PC-3 (cell line): ENCODE measurements at regions of chr6 and their contacts with region 1.

Region 1: DNA sequence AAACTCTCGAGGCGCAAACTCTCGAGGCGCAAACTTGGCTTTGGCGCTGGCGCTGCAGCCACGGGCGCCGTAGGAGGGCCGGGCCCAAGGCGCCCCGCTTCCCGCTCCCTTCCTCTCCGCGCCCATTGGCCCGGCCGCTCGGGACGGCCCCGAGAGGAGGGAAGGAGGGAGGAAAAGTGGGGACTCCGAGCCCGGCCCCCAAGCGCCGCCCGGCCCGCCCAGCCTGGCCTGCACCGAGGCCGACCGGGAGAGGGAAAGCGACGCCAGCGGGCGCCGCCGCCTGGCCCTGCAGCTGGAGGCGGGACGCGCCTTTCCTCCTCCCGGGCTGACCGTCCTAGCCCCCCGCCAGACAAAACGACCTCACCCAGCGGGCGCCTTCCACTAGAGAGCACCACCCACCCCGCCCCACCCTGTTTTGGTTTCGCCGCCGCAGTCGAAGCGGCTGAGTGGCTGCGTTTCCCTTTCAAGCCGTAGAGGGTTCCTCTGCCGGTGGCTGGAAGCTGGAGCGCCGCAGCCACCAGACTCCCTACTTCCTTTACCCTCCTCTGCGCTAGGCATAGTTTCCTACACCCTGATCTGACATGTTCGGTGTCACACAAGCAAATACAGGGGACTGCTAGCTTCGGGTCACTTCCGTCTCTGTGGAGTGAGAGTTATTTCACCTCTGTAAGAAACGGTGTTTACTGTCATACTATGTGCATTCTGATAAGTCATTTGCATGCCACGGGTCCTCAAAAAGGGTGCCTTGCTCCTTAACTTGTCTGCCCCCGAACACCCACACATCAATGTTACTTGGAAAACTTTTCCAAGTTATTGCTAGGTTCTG is at the start of gene MBOAT1:
- DNase-seq: peak; percentile 93
- ATAC-seq: peak; percentile 94
- H3K4me3 ChIP-seq: peak within 1 kb of the TSS; percentile 73
- H3K27ac ChIP-seq: peak within 1 kb of the TSS; percentile 74
- H3K4me1 ChIP-seq: peaks cover 20% of the 10 kb centered on the region
- H3K27me3 ChIP-seq: no peaks in the 10 kb centered on the region
- CTCF ChIP-seq: no peak
- total RNA-seq, gene MBOAT1: 8.4 and 10.3 TPM in 2 replicates

Region 2: GRCh38 chr6:19934996-19935591 is 277.5 kb before region 1 on chr6:
- CTCF ChIA-PET with region 1: no interaction called
- POLR2A ChIA-PET with region 1: no interaction called
- intact Hi-C with region 1: no loop called
- DNase-seq: no peak
- ATAC-seq: no peak
- H3K4me3 ChIP-seq: no peak overlapping the region
- H3K27ac ChIP-seq: no peak overlapping the region
- H3K4me1 ChIP-seq: no peaks in the 10 kb centered on the region
- H3K27me3 ChIP-seq: peaks cover 22% of the 10 kb centered on the region
- CTCF ChIP-seq: no peak

Region 3: GRCh38 chr6:20126789-20127653 is 85.6 kb before region 1 on chr6:
- CTCF ChIA-PET with region 1: interaction called, 5 read pairs
- POLR2A ChIA-PET with region 1: no interaction called
- intact Hi-C with region 1: loop called (anchors 2 kb)
- DNase-seq: peak; percentile 68
- ATAC-seq: peak; percentile 92
- H3K4me3 ChIP-seq: no peak overlapping the region
- H3K27ac ChIP-seq: no peak overlapping the region
- H3K4me1 ChIP-seq: peaks cover 8% of the 10 kb centered on the region
- H3K27me3 ChIP-seq: no peaks in the 10 kb centered on the region
- CTCF ChIP-seq: peak; percentile 91

Region 4: DNA sequence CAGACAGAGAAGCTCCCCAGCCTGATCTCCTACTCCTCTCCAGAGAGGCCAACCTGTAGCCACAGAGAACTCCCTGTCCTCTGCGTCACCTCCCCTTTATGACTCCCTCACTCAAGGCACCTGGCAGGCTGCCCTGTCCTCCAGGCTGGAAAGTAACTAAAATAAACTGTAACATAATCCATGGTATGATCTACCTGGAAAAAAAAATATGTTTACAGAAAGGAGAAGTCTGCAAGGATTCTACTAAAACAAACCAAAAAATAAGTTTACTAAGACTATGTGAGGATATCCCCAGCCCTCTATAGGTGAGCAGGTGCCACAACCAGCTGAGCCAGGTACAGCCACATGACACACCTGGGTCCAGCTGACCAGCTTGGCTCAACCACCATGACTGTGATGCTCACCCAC is 29.6 kb before region 1 on chr6:
- CTCF ChIA-PET with region 1: no interaction called
- POLR2A ChIA-PET with region 1: no interaction called
- intact Hi-C with region 1: loop called (anchors 1 kb)
- DNase-seq: peak; percentile 97
- ATAC-seq: peak; percentile 99
- H3K4me3 ChIP-seq: no peak overlapping the region
- H3K27ac ChIP-seq: peak overlapping the region; percentile 61
- H3K4me1 ChIP-seq: peaks cover 15% of the 10 kb centered on the region
- H3K27me3 ChIP-seq: no peaks in the 10 kb centered on the region
- CTCF ChIP-seq: peak; percentile 52

Region 5: DNA sequence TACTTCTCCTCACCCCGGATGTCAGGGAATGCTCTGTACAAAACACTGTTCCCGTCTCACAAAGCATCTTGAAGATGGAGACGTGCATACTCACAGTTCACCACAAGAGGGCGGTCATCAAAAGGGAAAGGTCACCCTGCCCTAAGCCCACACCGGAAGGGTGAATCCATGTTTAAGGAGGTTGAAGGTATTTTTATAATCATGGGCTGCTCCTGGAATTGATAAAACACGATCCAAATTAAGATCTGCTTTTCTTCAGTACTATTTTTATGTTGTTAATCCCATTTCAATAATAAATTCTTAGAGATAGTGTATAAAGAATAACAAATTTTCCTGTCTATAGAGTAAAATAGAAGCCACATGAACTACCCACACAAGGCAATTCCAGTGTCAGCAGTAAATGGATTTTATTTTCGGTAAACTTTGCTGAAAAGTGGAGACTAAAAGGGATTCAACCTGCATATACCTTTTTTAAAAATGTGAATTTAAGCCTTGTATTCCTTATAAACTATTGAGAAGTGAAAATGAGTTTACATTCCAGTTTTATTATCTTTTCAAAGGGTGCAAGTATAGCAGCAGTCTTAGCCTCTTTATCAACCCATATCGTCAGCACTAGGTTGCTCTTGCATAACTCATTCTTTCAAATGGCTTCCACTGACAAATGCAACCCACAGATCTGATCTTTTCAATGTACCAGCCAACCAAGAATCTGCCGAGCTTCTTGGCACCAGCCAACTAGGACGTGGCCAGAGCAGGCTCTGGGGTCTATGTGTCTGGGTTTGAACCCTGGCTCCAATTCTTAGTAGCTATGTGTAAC is 79.4 kb after region 1 on chr6:
- CTCF ChIA-PET with region 1: no interaction called
- POLR2A ChIA-PET with region 1: no interaction called
- intact Hi-C with region 1: loop called (anchors 5 kb)
- DNase-seq: peak; percentile 93
- ATAC-seq: peak; percentile 92
- H3K4me3 ChIP-seq: no peak overlapping the region
- H3K27ac ChIP-seq: no peak overlapping the region
- H3K4me1 ChIP-seq: peaks cover 5% of the 10 kb centered on the region
- H3K27me3 ChIP-seq: 0 out of 2 replicates have a peak, but pooled peaks cover 3% of the 10 kb centered on the region
- CTCF ChIP-seq: peak; percentile 94

Region 6: DNA sequence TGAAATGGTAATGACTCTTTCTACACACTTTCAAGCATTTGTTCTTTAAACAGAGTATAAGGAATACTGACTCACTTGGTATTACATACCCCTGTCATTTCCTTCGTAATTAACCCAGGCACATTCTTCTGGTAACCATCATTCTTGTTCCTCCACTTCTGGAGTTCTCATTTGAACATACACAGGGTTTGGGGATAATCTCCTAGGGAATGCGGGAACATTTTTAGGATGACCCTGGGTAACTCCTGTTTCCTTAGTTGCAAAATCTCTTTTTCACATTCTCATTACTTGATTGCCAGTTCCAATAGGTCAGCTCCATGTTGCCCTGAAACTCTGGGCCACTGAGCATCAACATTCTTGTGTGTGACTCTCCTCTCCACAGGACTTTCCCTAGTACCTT is 137.6 kb after region 1 on chr6:
- CTCF ChIA-PET with region 1: no interaction called
- POLR2A ChIA-PET with region 1: no interaction called
- intact Hi-C with region 1: no loop called
- DNase-seq: no peak
- ATAC-seq: no peak
- H3K4me3 ChIP-seq: no peak overlapping the region
- H3K27ac ChIP-seq: no peak overlapping the region
- H3K4me1 ChIP-seq: no peaks in the 10 kb centered on the region
- H3K27me3 ChIP-seq: peaks cover 6% of the 10 kb centered on the region; the same call in 1 of the 2 replicates
- CTCF ChIP-seq: no peak

Region 7: DNA sequence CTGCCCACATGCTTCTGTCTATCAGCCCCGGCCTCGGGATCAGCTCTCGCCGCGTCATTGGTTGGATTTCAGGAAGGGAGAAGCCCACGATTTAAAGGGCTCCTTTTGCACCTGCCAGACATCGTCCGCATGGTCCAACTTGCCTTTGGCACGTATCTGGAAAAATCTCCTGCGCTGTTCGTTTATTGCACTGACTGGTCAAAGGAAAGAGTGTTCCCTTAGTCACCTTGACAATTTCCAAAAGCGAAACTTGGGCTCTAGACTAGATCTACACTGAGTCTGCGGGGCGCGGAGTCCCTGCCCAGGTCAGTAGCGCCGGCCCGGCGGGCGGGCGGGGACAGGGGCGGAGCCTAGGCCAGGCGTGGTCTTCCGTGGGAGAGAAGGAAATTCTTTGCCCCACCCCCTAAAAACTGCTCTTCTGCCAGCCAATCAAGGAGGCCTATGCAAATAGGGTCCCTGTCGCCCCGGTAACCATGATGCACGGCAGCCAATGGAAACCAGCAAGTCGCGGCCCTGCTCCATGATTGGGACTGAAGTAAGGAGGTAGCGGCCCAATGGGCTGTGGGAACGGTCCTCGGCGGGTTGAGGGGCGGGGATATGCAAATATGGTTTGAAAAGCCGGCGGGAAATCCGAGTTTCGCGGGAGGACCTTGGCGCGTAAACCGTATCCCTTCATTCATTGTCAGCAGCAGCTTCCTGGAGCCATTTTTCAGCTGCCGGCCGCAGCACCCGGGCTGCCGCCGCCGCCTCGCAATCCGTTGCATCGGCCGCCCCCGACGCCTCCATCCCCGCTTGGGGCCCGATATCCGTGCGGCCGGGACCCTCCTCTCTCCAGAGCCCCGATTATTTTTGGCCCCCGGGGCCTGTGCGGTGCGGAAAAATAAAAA is 188.8 kb after region 1 on chr6 and contains the start of gene E2F3:
- CTCF ChIA-PET with region 1: no interaction called
- POLR2A ChIA-PET with region 1: no interaction called
- intact Hi-C with region 1: loop called (anchors 2 kb)
- DNase-seq: peak; percentile 99
- ATAC-seq: peak; percentile 81
- H3K4me3 ChIP-seq: peak within 1 kb of the TSS; percentile 90
- H3K27ac ChIP-seq: peak within 1 kb of the TSS; percentile 96
- H3K4me1 ChIP-seq: peaks cover 15% of the 10 kb centered on the region
- H3K27me3 ChIP-seq: peaks cover 3% of the 10 kb centered on the region; the same call in 1 of the 2 replicates
- CTCF ChIP-seq: no peak
- total RNA-seq, gene E2F3: 8.8 and 10.8 TPM in 2 replicates